BJ (cell line): ENCODE measurements at regions of chr12 and their contacts with region 1.

Region 1: GRCh38 chr12:43957732-43958372 is 122.0 kb downstream of the TMEM117 start:
- DNase-seq: no peak
- H3K4me3 ChIP-seq: no peak overlapping the region
- H3K27me3 ChIP-seq: no peaks in the 10 kb centered on the region
- CTCF ChIP-seq: peak; percentile 54

Region 2: GRCh38 chr12:44863867-44864266 is 906.0 kb after region 1 on chr12:
- CTCF ChIA-PET with region 1: no interaction called
- POLR2A ChIA-PET with region 1: interaction called, 16 read pairs
- DNase-seq: no peak
- H3K4me3 ChIP-seq: no peak overlapping the region
- H3K27me3 ChIP-seq: no peaks in the 10 kb centered on the region
- CTCF ChIP-seq: no peak